ENCODE measurements at regions of chr4 and their contacts with region 1.

Region 1: DNA sequence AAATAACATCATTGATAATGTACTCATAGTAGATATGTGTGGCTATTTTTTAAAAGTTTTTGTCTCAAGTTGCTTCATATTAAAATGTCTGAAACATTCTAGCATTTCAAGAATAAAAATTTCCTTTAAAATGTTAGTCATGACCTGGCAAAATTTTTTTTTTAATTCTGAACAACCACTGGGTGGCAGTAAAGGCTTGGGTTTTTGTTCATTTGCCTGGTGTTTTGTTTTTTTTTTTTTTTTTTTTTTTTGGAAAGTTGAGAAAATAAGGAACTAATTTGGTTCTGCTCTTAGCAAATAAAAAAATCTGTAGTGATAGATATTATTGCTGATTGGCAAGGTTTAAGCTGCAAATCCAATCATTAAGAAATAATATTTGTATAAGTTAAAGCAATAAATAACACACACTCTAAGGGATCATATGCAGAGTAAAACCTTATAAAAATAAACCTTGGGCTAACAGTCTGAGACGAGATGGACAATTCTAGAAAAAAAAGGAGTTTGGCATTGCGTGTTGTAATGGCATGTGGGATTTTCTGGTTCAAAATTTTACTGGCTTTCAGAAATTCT is 81.4 kb downstream of the CEP44 start:
- DNase-seq: no peak
- ATAC-seq: no peak
- H3K4me3 ChIP-seq: no peak overlapping the region
- H3K27ac ChIP-seq: no peak overlapping the region
- H3K4me1 ChIP-seq: no peaks in the 10 kb centered on the region
- H3K27me3 ChIP-seq: no peaks in the 10 kb centered on the region
- CTCF ChIP-seq: peak in 4 of 5 experiments; percentile 18 to 52 (median 40)
- POLR2A ChIP-seq: no peak

Region 2: DNA sequence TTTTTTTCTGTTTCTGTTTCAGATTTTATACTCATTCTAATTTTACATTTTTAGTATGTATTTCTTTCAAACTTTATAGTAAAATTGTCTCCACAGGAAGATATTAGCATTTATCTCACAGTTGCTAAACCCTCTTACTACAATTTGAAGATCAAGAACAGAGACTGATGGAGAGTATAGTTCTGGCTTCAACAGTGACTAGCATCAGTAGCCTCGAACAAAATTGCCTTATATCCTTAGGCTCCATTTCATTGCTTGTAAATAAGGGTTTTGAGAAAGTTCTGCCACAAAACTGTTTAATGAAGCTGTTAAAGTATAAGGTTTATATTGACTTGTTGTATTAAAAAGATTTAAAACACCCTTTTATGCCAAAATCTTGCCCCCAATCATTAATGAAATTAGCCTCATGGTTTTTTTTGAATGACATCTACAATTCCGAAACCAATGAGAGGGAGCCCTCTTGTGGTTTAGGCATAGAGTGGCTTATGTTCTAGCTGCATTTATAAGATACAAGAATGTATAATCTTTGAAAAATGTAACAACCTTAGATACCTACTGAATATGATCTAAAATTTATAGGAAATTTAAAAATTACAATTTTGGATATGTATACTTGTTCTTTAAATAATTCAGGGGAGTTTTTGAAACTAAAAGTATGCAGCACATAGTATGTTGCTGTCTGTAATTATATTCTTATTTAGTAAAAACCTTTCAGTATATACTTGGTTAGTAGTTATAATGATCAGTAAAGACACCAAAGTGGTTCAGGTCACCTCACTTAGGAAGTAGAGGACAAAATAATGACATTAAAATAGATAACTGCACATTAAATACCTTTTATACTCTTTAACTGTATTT is 267.0 kb after region 1 on chr4:
- in situ Hi-C with region 1: loop called (anchors 5 to 25 kb)
- intact Hi-C with region 1: loop called (anchors 1 kb)
- DNase-seq: no peak
- ATAC-seq: no peak
- H3K4me3 ChIP-seq: no peak overlapping the region
- H3K27ac ChIP-seq: no peak overlapping the region
- H3K4me1 ChIP-seq: peaks cover 0 to 4% of the 10 kb centered on the region in 2 donors
- H3K27me3 ChIP-seq: no peaks in the 10 kb centered on the region
- CTCF ChIP-seq: peak; percentile 22 to 65 (median 50)
- POLR2A ChIP-seq: no peak

Region 3: GRCh38 chr4:174713819-174714218 is 348.7 kb after region 1 on chr4:
- in situ Hi-C with region 1: no loop called
- intact Hi-C with region 1: loop called (anchors 2 kb)
- DNase-seq: no peak
- ATAC-seq: no peak
- H3K4me3 ChIP-seq: no peak overlapping the region
- H3K27ac ChIP-seq: no peak overlapping the region
- H3K4me1 ChIP-seq: peaks cover 0 to 3% of the 10 kb centered on the region in 2 donors
- H3K27me3 ChIP-seq: no peaks in the 10 kb centered on the region
- CTCF ChIP-seq: no peak
- POLR2A ChIP-seq: no peak

Region 4: DNA sequence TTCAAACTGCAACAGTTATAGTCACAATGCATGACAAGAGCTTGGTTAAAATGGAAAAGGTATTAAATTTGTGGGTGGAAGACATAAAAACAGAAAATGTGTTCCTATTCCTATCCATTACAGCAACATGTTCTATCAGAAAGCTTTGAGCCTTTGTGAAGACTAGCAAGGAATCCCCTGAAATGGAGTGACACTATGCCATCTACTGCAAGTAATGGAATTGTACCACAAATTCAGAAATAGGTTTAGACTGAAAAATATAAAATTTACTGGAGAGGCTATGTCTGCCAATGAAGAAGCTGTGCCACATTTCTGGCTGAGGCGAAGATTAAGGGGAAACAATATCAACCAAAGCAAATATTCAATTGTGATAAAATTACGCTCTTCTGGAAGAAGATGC is 800.9 kb after region 1 on chr4:
- in situ Hi-C with region 1: no loop called
- intact Hi-C with region 1: no loop called
- DNase-seq: no peak
- ATAC-seq: no peak
- H3K4me3 ChIP-seq: no peak overlapping the region
- H3K27ac ChIP-seq: no peak overlapping the region
- H3K4me1 ChIP-seq: no peaks in the 10 kb centered on the region
- H3K27me3 ChIP-seq: no peaks in the 10 kb centered on the region
- CTCF ChIP-seq: no peak
- POLR2A ChIP-seq: no peak

Region 5: DNA sequence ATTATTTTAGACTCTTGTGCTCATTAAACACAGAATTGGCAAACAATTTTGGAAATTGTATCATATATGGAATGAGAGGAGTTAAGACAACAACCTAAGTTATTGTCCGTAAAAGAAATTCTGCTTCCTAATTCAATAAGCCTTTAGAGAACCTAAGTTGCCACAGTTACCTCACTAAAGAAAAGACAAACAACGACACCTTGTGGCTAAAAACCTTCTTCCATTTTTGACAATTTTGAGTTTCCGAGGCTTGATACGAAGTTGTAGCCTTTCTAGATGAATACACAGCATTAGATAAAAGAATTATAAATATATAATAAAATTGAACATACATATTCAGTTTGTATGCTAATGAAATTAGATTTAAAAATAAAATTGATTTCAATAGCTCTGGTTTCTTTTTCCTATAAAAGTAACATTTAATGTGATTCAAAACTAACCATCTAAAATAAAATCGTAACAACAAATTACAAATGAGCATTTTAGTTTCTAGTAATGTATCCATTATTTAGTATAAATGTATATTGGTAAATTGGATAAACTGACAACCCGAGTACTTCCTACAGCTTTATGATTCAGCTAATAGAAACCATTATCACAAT is 1171.8 kb after region 1 on chr4:
- in situ Hi-C with region 1: loop called in 1 of 4 experiments (anchors 25 kb)
- intact Hi-C with region 1: no loop called
- DNase-seq: no peak
- ATAC-seq: no peak
- H3K4me3 ChIP-seq: no peak overlapping the region
- H3K27ac ChIP-seq: no peak overlapping the region
- H3K4me1 ChIP-seq: no peaks in the 10 kb centered on the region
- H3K27me3 ChIP-seq: no peaks in the 10 kb centered on the region
- CTCF ChIP-seq: peak in 1 of 5 experiments; percentile 28
- POLR2A ChIP-seq: no peak